ENCODE measurements at regions of chr3 and their contacts with region 1.

Region 1: DNA sequence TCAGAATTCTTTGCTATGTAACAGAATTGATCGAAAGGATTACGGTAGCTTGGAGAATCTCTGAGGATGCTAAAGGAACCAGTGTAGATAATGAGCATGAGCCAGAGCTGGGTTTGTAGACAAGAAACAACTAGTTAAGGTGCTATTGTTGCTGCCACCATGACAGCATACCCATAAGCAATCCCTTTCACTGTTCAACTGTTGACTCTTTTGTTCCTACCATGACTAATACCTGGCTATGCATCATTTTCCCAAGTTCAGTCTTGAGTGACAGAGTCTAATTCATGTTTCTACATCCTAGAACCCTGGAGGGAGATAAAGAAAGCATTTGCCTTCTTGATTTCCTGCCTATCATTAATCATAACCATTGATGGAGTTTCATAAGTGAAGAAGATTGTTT is 600.3 kb downstream of the OTOL1 start:
- DNase-seq: no peak

Region 2: DNA sequence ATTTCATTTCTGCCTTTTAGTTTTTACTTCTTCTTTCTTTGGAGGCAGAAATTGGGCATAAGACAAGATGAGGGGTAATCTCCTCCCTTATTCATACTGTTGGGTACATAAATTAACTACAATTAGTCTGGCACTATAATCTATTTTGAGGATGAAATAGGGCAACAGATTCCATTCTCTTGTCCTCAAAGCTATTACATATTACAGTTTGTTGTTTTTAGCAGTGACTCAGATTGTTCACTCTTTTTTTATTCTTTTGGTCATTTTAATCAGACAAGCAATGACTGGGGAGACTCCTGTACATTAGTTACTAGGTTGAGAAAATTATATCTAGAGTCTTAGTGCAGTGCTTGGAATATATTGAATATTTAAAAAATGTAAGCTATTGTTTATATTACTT is 44.2 kb before region 1 on chr3:
- intact Hi-C with region 1: loop called in 1 of 2 experiments (anchors 5 kb)
- DNase-seq: no peak

Region 3: DNA sequence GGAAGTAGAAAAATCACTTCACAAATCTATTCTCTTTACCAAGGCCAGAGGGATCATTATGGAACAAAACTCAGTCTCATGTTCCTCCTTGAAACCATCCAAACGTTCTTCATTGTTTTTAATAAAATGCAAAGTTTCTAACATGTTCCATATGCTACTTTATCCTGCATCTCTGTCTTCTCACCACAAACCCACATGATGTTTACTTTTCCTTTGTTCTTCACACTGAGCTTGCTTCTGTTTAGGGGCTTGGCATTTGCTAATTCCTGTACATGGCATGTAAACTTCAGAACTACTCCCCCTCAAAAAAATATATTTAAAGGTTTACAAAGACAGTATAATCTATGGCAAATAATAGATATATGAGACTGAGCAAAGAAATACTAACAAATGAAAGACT is 51.1 kb after region 1 on chr3:
- intact Hi-C with region 1: no loop called
- DNase-seq: no peak

Measured in posterior vena cava (tissue), 2 donors.